Tibial artery (tissue), 4 donors: ENCODE measurements at regions of chr1 and their contacts with region 1.

Region 1: GRCh38 chr1:67500413-67500959 is 70.3 kb upstream of the SERBP1 start:
- DNase-seq: peak; percentile 88 to 90
- H3K4me3 ChIP-seq: no peak overlapping the region
- H3K27ac ChIP-seq: no peak overlapping the region
- H3K4me1 ChIP-seq: peaks cover 0 to 6% (median 4%) of the 10 kb centered on the region in 4 donors
- H3K27me3 ChIP-seq: peaks cover 0 to 6% of the 10 kb centered on the region in 2 donors
- CTCF ChIP-seq: peak; percentile 96 to 99

Region 2: GRCh38 chr1:67230539-67230938 is 269.9 kb before region 1 on chr1:
- intact Hi-C with region 1: loop called (anchors 10 kb)
- DNase-seq: no peak
- H3K4me3 ChIP-seq: no peak overlapping the region
- H3K27ac ChIP-seq: no peak overlapping the region
- H3K4me1 ChIP-seq: no peaks in the 10 kb centered on the region
- H3K27me3 ChIP-seq: no peaks in the 10 kb centered on the region
- CTCF ChIP-seq: no peak

Region 3: GRCh38 chr1:67347688-67348472 is 152.6 kb before region 1 on chr1:
- intact Hi-C with region 1: loop called (anchors 2 kb)
- DNase-seq: no peak
- H3K4me3 ChIP-seq: no peak overlapping the region
- H3K27ac ChIP-seq: no peak overlapping the region
- H3K4me1 ChIP-seq: no peaks in the 10 kb centered on the region
- H3K27me3 ChIP-seq: no peaks in the 10 kb centered on the region
- CTCF ChIP-seq: peak; percentile 67 to 72

Region 4: DNA sequence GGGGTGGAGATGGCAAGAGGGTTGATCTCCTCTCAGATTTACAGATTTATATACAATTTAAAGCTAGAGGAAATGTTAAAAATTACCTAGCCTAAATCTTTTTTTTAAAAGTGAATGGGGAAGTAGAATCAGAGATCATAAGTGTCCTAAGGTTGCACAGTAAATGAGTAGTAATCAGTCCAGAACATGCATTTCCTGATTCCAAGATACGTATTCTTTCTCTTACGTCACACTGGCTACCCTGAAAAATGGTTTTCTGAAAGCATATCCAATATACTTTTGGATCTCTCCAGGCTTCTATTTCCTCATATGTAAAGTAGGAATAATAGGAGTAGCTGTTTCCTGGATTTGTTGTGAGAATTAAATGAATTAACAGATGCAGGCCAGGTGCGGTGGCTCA is 196.2 kb after region 1 on chr1:
- intact Hi-C with region 1: no loop called
- DNase-seq: no peak
- H3K4me3 ChIP-seq: no peak overlapping the region
- H3K27ac ChIP-seq: no peak overlapping the region
- H3K4me1 ChIP-seq: no peaks in the 10 kb centered on the region
- H3K27me3 ChIP-seq: no peaks in the 10 kb centered on the region
- CTCF ChIP-seq: no peak